Endothelial cell of umbilical vein (primary cell): ENCODE measurements at regions of chr17 and their contacts with region 1.

Region 1: DNA sequence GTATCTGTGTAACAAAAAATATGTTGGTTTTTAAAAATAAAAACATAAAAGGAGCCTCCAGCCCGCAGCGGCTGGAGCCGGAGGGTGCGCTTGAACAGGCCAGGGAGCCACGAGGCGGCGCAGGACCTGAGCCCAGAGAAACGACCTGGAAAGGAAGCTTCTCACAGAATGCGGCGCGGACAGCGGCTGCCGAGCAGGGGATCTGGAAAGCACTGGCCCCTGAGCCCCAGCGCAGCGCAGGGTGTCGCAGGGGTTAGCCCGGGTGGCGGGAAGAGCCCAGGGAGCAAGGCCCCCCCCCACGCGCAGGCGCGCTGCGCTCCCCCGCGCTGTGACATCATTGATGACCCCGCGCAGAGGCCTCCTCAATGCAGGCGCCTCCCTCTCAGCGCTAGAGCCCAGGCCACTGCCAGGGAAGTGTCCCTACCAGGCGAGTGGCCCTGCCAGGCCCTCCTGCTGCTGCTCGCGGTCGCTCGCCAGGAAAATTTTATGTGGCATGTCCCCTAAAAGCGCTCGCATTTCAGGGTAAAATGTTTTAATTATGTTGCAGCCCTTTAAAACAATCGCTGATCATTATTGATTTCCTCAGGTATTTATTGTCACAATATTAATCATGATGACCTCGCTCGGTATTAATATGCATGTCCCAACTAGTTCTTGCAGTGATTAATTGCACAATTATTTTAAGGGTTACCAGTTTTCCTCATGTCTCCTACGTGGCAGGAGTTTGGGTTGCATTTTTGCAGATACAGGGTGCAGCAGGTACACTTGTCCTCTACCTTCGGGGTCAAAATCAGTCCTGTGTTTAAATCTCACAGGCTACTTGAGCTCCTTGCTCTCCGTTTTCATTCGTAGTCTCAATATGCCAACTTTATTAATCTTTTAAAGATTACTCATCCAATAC is 134.2 kb downstream of the USP22 start:
- DNase-seq: peak; percentile 87
- H3K4me3 ChIP-seq: peak overlapping the region in 2 of 3 experiments; percentile 37 to 44
- H3K27ac ChIP-seq: peak overlapping the region; percentile 19
- H3K4me1 ChIP-seq: peaks cover 2% of the 10 kb centered on the region
- H3K27me3 ChIP-seq: no peaks in the 10 kb centered on the region
- CTCF ChIP-seq: peak; percentile 64 to 73
- POLR2A ChIP-seq: no peak

Region 2: DNA sequence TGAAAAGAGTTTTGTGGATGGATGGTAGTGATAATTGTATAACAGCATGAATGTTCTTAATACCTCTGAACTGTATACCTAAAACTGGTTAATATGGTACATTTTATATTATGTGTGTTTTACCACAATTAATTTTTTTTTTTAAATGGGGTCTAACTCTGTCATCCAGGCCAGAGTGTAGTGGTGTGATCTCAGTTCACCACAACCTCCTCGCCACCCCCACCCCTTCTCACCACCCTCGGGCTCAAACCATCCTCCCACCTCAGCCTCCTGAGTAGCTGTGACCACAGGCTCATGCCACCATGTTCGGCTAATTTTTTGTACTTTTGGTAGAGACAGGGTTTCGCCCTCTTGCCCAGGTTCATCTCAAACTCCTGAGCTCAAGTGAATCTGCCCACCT is 205.9 kb before region 1 on chr17:
- CTCF ChIA-PET with region 1: no interaction called
- POLR2A ChIA-PET with region 1: no interaction called
- dilution Hi-C with region 1: no loop called
- intact Hi-C with region 1: no loop called
- DNase-seq: no peak
- H3K4me3 ChIP-seq: no peak overlapping the region
- H3K27ac ChIP-seq: no peak overlapping the region
- H3K4me1 ChIP-seq: no peaks in the 10 kb centered on the region
- H3K27me3 ChIP-seq: no peaks in the 10 kb centered on the region
- CTCF ChIP-seq: no peak
- POLR2A ChIP-seq: no peak

Region 3: DNA sequence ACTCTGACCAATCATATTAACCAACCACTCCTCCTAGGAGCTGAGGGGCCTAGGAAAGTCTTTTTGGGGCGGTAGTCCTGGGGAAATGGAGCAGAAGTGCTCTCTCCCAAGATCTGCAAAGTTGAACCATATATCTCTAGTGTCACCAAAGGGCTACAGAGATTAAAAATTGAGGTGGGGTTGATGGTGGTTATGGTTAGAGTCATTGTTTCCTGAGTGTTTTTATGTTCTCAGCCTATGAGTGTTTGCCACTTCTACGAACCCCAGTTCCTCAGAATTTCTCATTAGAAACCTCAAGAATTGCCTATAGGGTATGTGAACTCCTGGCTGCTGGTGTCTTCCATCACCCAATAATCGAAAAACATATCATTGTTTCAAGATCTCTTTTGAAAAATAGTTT is 111.3 kb before region 1 on chr17:
- CTCF ChIA-PET with region 1: no interaction called
- POLR2A ChIA-PET with region 1: no interaction called
- dilution Hi-C with region 1: no loop called
- intact Hi-C with region 1: loop called (anchors 5 kb)
- DNase-seq: no peak
- H3K4me3 ChIP-seq: no peak overlapping the region
- H3K27ac ChIP-seq: no peak overlapping the region
- H3K4me1 ChIP-seq: no peaks in the 10 kb centered on the region
- H3K27me3 ChIP-seq: no peaks in the 10 kb centered on the region
- CTCF ChIP-seq: no peak
- POLR2A ChIP-seq: no peak

Region 4: DNA sequence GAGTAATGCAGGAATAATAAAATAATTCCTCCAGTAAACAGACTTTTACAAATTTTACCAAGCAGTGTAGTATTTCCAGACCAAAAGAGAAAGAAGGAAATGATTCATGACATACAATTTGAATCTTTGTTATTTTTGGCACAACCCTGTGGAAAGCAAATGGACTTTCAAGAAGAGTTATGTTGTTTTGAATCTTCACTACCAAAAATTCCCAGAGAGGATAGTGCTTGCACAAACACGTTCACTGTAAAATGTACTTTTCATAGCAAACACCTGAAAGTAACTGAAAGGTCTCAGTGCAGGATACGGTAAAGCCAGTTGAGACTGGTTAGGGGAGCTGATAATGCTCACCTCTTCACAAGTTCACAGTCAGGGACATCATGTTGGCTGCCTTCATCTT is 27.1 kb after region 1 on chr17:
- CTCF ChIA-PET with region 1: interaction called, 8 read pairs
- POLR2A ChIA-PET with region 1: no interaction called
- dilution Hi-C with region 1: no loop called
- intact Hi-C with region 1: loop called (anchors 2 kb)
- DNase-seq: peak; percentile 91
- H3K4me3 ChIP-seq: peak overlapping the region in 1 of 3 experiments; percentile 52
- H3K27ac ChIP-seq: peak overlapping the region; percentile 93
- H3K4me1 ChIP-seq: peaks cover 33% of the 10 kb centered on the region
- H3K27me3 ChIP-seq: no peaks in the 10 kb centered on the region
- CTCF ChIP-seq: no peak
- POLR2A ChIP-seq: no peak

Region 5: DNA sequence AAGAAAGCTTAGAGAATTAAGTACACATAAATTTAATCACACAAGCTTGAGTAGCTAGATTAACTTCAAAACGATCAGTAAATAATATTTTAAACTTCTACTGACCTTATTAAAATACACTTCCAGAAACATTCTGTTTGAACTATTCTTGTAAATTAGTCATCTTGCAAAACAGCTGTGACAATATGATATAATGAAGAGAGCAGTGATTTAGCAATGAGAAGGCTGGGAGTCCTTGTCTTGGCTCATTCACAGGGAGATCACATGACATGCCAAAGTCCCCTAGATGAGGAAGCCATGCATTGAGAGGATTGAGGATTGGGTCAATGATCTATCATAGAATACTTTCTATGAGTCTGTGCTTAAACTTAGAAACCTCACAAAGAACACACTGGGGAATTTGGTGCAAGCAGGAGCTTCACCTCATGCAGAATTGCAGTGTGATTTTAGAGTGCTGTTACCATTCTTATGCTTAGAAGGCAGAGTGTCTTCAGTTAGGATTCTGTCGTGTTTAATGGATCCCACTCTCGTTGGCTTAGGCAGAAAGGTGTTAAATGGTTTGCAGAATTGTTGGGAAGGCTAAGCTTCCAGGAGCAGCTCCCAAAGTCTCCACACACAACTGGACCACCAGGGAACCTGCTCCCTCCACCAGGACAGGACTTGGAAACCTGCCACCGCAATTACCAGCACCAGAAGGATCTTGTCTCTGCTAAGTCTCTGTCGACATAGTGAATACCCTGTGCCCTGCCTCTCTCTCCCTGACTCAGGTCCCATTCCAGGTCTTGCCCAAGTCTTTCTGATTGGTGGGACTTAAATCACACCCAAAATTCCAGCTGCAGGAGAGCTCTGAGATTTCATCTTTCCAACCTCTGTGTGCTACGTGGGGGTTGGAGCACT is 47.1 kb after region 1 on chr17:
- CTCF ChIA-PET with region 1: no interaction called
- POLR2A ChIA-PET with region 1: no interaction called
- dilution Hi-C with region 1: no loop called
- intact Hi-C with region 1: loop called (anchors 5 kb)
- DNase-seq: peak; percentile 21
- H3K4me3 ChIP-seq: no peak overlapping the region
- H3K27ac ChIP-seq: no peak overlapping the region
- H3K4me1 ChIP-seq: no peaks in the 10 kb centered on the region
- H3K27me3 ChIP-seq: peaks cover 3 to 4% of the 10 kb centered on the region in 2 experiments
- CTCF ChIP-seq: no peak
- POLR2A ChIP-seq: no peak

Region 6: GRCh38 chr17:20992987-20993862 is 84.6 kb after region 1 on chr17:
- CTCF ChIA-PET with region 1: interaction called, 27 read pairs
- POLR2A ChIA-PET with region 1: no interaction called
- dilution Hi-C with region 1: no loop called
- intact Hi-C with region 1: loop called (anchors 2 kb)
- DNase-seq: peak; percentile 87
- H3K4me3 ChIP-seq: no peak overlapping the region
- H3K27ac ChIP-seq: no peak overlapping the region
- H3K4me1 ChIP-seq: no peaks in the 10 kb centered on the region
- H3K27me3 ChIP-seq: no peaks in the 10 kb centered on the region
- CTCF ChIP-seq: peak; percentile 95 to 96
- POLR2A ChIP-seq: no peak

Region 7: GRCh38 chr17:21345236-21345635 is 436.6 kb after region 1 on chr17:
- CTCF ChIA-PET with region 1: no interaction called
- POLR2A ChIA-PET with region 1: no interaction called
- dilution Hi-C with region 1: no loop called
- intact Hi-C with region 1: no loop called
- DNase-seq: no peak
- H3K4me3 ChIP-seq: no peak overlapping the region
- H3K27ac ChIP-seq: no peak overlapping the region
- H3K4me1 ChIP-seq: no peaks in the 10 kb centered on the region
- H3K27me3 ChIP-seq: no peaks in the 10 kb centered on the region
- CTCF ChIP-seq: no peak
- POLR2A ChIP-seq: no peak